Activated T-helper 1 cell treated with anti-CD3 and anti-CD28 coated beads, Interleukin-12 subunit alpha, Interleukin-12 subunit beta, Interleukin-2, Interleukin-4 antibody, amounts not matched to agents 30 ng/mL and 10 ng/mL and 1 ng/mL, durations not matched to agents 14 hours and 24 hours and 36 hours (primary cell): ENCODE measurements at regions of chr17 and their contacts with region 1.

Region 1: DNA sequence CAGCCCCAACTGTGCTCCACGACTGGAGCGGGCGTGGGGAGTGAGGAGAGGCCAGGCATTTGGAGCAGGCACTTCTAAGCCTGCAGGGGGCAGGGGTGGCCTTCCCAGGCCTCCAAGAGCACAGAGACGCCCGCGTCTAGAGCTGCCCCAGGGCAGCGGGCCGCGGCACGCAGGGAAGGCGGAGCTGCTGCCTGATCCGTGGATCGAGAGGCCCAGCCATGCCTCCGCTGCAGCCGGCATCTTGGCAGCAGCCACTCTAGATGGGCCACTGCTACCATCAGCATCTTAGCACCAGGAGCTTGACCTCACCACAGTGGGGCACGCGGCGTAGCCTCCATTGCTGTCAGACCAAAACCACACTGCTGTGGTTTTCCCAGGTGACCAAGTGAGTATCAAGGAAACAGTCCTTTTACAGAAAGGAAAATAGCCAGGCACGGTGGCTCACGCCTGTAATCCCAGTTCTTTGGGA is 20.4 kb upstream of the WDR45B start:
- DNase-seq: peak; percentile 18
- H3K4me3 Mint-ChIP-seq: peak overlapping the region; percentile 11
- H3K27ac Mint-ChIP-seq: no peak overlapping the region
- H3K4me1 Mint-ChIP-seq: peaks cover 6% of the 10 kb centered on the region
- H3K27me3 Mint-ChIP-seq: peaks cover 3% of the 10 kb centered on the region

Region 2: DNA sequence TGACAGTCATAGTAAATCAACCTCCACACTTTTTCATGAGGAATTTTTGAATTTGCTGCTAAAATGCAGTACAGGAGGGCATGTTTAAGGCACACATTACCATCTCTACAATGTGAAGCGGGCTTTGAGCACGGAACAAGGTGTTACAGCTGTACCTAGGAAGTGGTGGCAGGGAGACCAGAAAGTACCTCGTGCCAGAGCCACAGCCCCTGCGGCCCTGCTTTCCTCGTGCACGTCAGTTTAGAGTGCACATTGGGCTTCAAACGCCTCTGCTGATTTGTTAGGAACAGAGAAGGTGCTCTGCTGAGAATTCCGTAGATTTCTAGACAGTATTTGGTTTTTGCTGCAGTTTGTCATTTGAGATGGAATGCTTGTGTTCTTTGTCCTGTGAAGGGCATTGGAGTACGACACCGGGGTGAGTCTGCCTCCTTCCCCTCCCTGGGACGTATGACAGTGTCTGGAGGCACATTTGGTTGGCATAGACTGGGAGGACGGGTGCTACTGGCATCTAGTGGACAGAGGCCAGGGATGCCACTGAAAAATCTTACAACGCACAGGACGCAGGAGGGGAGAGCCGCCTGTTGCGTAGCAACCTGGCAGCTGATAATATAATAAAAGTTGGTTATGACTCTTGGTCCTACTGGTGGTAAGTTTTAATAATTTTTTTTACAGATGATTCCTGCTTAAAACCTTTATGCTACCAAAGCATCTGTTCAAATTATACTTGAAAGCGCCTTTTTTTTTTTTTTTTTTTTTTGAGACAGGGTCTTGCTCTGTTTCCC is 140.0 kb before region 1 on chr17:
- intact Hi-C with region 1: no loop called
- DNase-seq: no peak
- H3K4me3 Mint-ChIP-seq: no peak overlapping the region
- H3K27ac Mint-ChIP-seq: peak overlapping the region; percentile 24
- H3K4me1 Mint-ChIP-seq: peaks cover 42% of the 10 kb centered on the region
- H3K27me3 Mint-ChIP-seq: no peaks in the 10 kb centered on the region

Region 3: GRCh38 chr17:82583720-82584234 is 84.9 kb before region 1 on chr17:
- intact Hi-C with region 1: no loop called
- DNase-seq: no peak
- H3K4me3 Mint-ChIP-seq: no peak overlapping the region
- H3K27ac Mint-ChIP-seq: no peak overlapping the region
- H3K4me1 Mint-ChIP-seq: peaks cover 7% of the 10 kb centered on the region
- H3K27me3 Mint-ChIP-seq: no peaks in the 10 kb centered on the region

Region 4: DNA sequence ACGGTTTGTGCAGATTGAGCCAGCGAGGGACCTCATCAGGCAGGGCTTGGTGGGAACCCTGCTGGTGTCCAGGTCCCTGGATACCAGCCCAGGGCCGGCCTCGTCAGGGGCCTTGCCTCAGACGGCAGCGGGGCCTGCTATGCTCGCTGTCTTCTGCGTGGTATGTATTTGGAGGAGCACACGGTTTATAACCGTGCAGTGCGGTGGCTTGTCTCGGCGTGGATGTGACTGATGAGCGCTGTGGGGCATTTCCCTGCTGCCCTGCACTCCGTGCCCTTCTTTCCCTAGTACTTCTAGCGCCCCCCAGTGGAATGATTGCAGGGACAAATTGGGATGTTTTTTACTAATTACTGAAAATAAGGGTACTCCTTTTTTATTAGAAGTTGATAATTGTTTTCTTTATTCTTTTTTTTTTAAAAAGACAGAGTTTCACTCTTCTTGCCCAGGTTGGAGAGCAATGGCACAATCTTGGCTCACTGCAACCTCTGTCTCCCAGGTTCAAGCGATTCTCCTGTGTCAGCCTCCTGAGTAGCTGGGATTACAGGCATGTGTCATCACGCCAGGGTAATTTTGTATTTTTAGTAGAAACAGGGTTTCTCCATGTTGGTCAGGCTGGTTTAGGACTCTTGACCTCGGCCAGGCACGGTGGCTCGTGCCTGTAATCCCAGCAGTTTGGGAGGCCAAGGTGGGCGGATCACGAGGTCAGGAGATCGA is 98.5 kb after region 1 on chr17:
- intact Hi-C with region 1: loop called (anchors 2 kb)
- DNase-seq: no peak
- H3K4me3 Mint-ChIP-seq: no peak overlapping the region
- H3K27ac Mint-ChIP-seq: no peak overlapping the region
- H3K4me1 Mint-ChIP-seq: peaks cover 16% of the 10 kb centered on the region
- H3K27me3 Mint-ChIP-seq: no peaks in the 10 kb centered on the region

Region 5: DNA sequence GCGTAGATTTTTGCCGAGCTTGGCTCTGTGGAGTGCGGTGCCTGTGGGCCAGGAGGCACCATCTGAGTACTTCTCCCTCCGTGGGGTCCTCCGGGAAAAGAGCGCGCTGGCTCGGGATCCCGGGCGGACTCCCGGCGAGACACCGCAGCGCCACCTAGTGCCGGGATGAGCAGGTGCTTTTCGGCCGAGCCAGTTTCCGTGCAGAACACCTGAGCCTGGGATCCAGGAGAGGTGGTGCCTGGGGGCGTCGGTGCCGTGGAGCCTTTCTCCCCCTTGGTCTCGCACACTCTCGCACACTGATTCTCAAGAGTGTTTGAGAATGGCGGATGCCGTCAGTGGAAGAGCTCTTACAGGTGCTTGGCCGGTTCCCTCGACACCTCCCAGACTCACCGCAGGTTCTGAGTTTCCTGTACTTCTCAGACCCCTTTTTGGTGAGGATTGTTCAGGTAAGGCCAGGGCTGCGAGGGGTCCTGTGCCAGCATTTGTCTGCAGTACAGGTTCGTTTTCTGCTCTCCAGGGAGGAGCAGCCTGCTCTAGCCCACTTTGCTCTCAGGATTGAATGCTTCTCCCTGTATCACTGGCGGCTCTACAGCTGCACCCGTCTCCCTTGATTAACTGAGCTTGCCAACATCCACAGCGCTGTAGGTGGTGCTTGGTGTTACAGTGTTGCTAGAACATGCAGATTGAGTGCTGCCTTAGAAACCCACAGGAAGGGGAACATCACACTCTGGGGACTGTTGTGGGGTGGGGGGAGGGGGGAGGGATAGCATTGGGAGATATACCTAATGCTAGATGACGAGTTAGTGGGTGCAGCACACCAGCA is 106.5 kb after region 1 on chr17:
- intact Hi-C with region 1: loop called (anchors 1 kb)
- DNase-seq: peak; percentile 17
- H3K4me3 Mint-ChIP-seq: no peak overlapping the region
- H3K27ac Mint-ChIP-seq: no peak overlapping the region
- H3K4me1 Mint-ChIP-seq: peaks cover 10% of the 10 kb centered on the region
- H3K27me3 Mint-ChIP-seq: no peaks in the 10 kb centered on the region